ENCODE measurements at regions of chr16 and their contacts with region 1.

Region 1: DNA sequence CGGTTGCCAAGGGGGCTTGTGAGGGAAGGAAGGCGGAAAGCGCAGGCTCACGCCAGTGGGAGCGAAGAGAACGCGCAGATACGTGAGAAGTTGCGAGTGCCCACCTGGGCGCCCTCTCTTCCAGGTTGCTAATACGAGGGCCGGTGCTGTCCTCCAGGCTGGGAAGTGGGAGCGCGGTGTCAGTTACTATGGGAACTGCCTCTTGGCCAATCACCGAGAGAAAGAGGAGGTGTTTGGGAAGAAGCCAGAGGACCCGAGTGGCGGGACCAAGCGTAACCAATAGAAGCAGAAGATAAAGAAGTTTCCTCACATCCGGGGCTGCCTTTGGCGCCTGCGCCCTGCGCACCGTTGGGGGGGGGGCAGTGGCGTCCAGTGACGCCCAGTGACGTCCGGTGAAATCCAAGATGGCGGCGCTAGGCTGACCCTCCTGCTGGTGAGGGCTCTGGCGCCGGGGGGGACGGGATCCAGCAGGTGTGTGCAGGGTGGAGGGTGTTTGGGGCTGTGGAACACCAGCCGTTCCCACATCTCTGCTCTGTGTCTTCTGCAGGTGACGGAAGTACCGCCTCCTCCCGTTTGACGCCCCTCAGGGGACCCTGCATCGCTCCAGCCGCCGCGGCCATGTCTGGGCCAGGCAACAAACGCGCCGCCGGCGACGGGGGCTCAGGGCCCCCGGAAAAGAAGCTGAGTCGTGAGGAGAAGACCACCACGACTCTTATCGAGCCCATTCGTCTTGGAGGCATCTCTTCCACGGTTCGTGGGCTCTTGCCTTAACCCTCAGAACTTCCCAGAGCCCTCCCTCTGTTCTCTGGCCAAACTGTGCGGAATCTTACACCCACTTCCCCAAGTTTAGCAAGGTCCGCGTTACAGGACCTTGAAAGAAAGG is at the starts of genes CFAP119 and RNF40:
- DNase-seq: peak; percentile 96
- H3K4me3 ChIP-seq: peak within 1 kb of the TSS; percentile 84
- H3K4me3 Mint-ChIP-seq: peak within 1 kb of the TSS; percentile 87
- H3K27ac Mint-ChIP-seq: peak within 1 kb of the TSS; percentile 73
- H3K4me1 ChIP-seq: peaks cover 15% of the 10 kb centered on the region; the same call in 1 of the 2 replicates
- H3K4me1 Mint-ChIP-seq: peaks cover 4% of the 10 kb centered on the region
- H3K27me3 ChIP-seq: no peaks in the 10 kb centered on the region
- H3K27me3 Mint-ChIP-seq: no peaks in the 10 kb centered on the region
- CTCF ChIP-seq: no peak
- total RNA-seq, gene CFAP119: 4.0 and 4.5 TPM in 2 replicates
- total RNA-seq, gene RNF40: 94.0 and 97.6 TPM in 2 replicates

Region 2: DNA sequence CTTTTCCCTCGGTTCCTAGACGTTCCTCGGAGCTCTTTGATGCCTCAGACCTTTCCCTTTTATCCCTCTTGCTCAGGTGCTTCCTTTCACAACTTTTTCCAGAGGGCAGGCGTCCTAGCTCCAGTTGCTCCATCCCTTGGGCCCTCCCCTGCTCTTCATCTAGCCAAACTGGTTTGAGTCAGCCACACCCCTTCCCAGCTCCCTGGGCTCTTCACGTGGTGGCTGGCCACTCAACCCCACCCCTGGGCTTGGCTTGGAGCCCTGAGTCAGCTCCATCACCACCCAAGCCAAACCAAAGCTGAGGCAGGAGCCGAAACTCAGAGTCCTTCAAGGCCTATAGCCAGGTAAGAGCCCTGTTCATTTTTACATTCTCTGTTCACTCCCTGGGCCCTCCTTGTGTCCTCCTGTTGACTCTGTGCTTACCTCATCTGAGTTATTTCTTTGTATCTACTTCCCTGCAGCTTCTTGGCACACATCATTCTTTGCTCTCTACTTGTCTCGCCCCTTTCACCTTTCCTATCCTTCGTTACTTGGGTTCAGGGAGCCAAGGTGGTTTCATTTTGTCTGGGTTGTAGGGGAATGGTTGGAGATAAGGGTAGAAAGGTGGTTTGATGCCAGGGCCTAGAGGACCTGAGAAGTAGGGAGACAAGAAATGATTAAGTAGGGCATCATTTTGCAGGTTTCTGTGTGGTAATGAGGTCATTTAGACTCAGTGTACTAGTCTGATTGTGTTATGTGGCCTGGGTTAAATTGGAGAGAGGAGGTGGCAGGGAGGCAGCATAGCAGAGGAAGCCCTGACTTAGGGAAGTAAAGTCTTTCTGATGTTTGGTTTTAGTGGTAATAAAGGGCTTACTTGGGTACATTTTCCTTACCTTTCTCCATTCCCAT is 21.6 kb before region 1 on chr16:
- CTCF ChIA-PET with region 1: no interaction called
- POLR2A ChIA-PET with region 1: interaction called, 3 read pairs
- intact Hi-C with region 1: loop called (anchors 1 kb)
- DNase-seq: peak; percentile 92
- H3K4me3 ChIP-seq: peak overlapping the region; percentile 12; the same call in 1 of the 2 replicates
- H3K4me3 Mint-ChIP-seq: peak overlapping the region; percentile 59
- H3K27ac Mint-ChIP-seq: peak overlapping the region; percentile 90
- H3K4me1 ChIP-seq: peaks cover 27% of the 10 kb centered on the region
- H3K4me1 Mint-ChIP-seq: peaks cover 37% of the 10 kb centered on the region
- H3K27me3 ChIP-seq: no peaks in the 10 kb centered on the region
- H3K27me3 Mint-ChIP-seq: no peaks in the 10 kb centered on the region
- CTCF ChIP-seq: no peak

Region 3: DNA sequence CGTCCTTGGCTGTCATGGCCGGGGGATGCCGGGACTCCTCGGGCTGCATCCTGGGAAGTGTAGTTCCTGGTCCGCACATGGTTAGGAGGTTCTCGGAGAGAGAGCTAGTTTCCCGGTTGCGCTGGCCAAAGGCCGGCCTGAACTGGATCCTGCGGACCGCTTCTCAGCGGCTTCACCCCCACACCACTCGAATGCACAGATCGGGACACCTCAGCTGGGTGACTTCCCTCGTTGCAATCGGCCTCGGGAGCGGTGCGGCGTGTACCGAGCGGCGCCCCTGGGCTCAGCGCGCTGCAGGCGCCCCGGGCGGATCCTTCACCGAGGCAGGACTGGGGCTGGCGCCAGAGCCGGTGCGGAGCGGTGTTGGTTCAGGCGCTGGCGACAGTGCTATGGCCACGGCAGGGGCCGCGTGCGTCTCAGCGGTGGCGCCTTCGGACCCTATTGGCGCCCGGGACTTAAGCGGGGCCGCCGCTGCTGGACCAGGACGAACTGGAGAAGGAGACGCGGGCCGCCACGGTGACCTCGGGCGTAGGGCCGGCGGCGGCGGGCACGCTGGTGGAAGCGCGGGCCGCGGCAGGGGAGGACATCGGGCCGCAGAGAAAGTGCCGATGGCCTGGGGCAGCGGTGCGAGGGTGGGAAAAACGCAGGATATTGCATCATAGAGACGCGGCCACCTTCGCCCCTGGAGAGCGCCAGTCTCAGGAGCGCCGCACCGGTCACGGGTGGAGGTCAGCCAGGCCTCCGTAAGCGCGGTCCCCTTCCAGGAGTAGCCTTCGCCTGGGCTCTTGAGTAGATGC is 13.4 kb after region 1 on chr16:
- CTCF ChIA-PET with region 1: interaction called, 4 read pairs
- POLR2A ChIA-PET with region 1: interaction called, 6 read pairs
- intact Hi-C with region 1: loop called (anchors 1 kb)
- DNase-seq: peak; percentile 86 to 87
- H3K4me3 ChIP-seq: peak overlapping the region; percentile 70
- H3K4me3 Mint-ChIP-seq: peak overlapping the region; percentile 75
- H3K27ac Mint-ChIP-seq: peak overlapping the region; percentile 91
- H3K4me1 ChIP-seq: peaks cover 12% of the 10 kb centered on the region
- H3K4me1 Mint-ChIP-seq: peaks cover 10% of the 10 kb centered on the region
- H3K27me3 ChIP-seq: no peaks in the 10 kb centered on the region
- H3K27me3 Mint-ChIP-seq: no peaks in the 10 kb centered on the region
- CTCF ChIP-seq: no peak

Region 4: DNA sequence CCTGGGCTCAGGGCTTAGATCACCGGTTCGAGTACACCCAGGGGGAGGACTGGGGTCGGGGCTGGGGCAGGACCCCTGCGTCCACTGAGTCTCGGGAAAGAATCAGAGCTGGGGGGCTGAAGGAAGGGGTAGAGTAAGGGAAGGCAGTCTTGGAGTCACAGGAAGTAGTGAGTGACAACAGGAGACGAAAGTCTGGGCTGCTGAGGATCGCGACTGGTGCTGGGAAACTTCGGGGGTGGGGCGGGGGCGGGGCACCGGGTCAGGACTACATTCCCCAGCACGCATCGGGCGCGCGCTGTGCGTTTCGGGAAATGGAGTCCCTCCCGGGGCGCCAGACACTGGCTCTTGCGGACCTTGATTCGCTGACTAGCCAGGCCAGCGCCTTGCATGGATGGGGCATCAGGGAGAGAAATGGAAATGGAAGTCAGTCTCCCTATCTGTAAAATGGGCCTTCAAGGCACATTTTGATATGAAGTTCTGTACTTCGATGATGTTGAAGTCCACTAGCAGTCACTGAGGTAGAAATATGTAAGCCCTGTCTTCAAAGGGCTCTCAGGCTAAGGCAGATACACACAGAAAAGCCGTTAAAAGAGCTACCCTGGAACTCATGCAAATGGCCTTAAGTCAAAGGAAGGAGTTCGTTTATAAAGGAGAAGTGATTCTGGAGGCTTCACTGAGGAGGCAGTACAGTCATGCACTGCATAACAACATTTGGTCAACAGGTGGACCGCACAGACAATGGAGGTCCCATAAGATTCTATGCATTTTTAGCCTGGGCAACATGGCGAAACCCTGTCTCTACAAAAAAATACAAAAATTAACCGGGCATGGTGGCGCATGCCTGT is 134.9 kb after region 1 on chr16:
- CTCF ChIA-PET with region 1: interaction called, 10 read pairs
- POLR2A ChIA-PET with region 1: no interaction called
- intact Hi-C with region 1: no loop called
- DNase-seq: peak; percentile 57 to 58
- H3K4me3 ChIP-seq: peak overlapping the region; percentile 41
- H3K4me3 Mint-ChIP-seq: peak overlapping the region; percentile 90
- H3K27ac Mint-ChIP-seq: peak overlapping the region; percentile 83
- H3K4me1 ChIP-seq: peaks cover 30% of the 10 kb centered on the region
- H3K4me1 Mint-ChIP-seq: peaks cover 23% of the 10 kb centered on the region
- H3K27me3 ChIP-seq: no peaks in the 10 kb centered on the region
- H3K27me3 Mint-ChIP-seq: no peaks in the 10 kb centered on the region
- CTCF ChIP-seq: no peak